Activated CD8-positive, alpha-beta T cell treated with anti-CD3 and anti-CD28 coated beads for 36 hours (primary cell): ENCODE measurements at regions of chr11 and their contacts with region 1.

Region 1: DNA sequence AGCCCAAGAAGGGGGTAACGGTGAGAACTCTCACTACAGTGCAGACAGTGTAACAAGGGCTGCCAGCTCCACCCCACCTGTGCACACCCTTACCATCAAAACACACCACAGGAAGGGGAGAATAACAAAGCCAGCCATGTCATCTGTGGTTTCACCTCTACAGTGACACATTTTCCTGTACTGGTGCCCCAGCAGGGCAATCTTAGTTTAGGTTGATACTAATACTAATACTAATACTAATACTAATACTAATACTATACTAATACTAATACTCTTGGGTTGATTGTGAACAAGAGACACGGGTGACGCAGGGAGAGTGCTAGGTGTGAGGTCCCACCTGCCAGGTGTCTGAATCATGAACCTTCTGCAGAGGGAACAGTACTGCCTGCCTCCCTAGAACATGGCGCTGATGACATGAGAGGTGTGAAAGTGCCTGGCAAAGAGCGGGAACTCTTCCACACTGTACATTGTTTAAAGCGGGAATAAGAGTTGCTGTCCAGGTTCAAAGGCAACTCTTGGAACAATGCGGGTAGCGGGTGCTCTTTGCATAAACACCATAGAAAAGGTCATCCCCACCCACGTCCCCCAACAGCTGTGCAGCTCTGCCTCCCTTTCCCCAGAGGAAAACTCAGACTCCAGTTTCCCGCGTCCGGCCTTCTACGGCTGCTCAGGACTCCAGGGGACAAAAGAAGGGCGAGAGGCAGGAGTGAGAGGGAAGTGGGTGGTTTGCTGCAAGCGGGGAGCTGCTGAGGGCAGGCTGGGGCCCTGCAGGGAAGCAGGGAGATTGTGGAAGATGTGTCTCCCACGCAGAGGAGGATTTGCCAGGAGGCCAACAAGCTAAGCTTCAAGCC is 25.0 kb upstream of the TMPRSS4 start:
- DNase-seq: peak; percentile 85
- ATAC-seq: peak; percentile 78
- H3K4me3 Mint-ChIP-seq: no peak overlapping the region
- H3K27ac Mint-ChIP-seq: peak overlapping the region; percentile 82
- H3K4me1 Mint-ChIP-seq: peaks cover 59% of the 10 kb centered on the region
- H3K27me3 Mint-ChIP-seq: no peaks in the 10 kb centered on the region
- CTCF ChIP-seq: no peak

Region 2: DNA sequence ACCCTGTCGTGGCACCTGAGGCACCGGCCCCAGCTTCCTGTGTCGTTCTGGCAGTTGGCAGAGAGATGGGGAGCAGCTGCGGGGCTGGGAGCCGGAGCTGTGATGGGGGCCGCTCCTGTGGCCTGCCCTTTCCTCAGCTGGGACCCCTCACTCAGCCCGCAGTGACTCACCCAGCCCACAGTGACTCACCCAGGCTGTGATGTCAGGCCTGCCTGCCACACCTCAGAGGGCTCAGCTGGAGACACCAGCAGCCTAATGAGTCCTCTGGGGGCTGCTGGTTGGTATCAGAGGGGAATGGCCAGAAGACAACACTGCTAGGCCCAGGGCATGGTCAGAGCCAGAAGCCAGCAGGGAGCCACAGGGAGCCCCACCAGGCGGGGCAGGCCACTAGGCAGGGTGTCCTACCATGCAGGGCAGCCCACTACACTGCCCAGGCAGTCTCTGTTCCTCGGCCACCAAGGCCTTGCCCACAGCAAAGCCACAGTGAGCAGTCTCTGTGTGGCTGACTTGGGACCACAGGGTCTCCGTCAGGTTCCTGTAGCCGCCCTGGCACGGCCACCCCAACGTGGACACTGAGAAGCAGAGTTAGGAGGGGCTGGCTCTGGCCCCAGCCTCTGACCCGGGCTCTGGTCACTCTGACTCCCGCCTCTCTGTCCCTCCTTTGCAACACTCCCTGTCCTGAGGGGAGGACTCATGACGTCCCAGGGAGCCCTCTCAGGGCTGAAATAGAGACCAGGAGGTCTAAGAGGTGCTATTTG is 223.0 kb before region 1 on chr11:
- CTCF ChIA-PET with region 1: interaction called, 168 read pairs
- POLR2A ChIA-PET with region 1: interaction called, 7 read pairs
- intact Hi-C with region 1: loop called (anchors 5 kb)
- DNase-seq: peak; percentile 97
- ATAC-seq: peak; percentile 89
- H3K4me3 Mint-ChIP-seq: peak overlapping the region; percentile 42
- H3K27ac Mint-ChIP-seq: peak overlapping the region; percentile 77
- H3K4me1 Mint-ChIP-seq: peaks cover 68% of the 10 kb centered on the region
- H3K27me3 Mint-ChIP-seq: no peaks in the 10 kb centered on the region
- CTCF ChIP-seq: no peak

Region 3: GRCh38 chr11:117907251-117907981 is 144.4 kb before region 1 on chr11:
- CTCF ChIA-PET with region 1: interaction called, 16 read pairs
- POLR2A ChIA-PET with region 1: no interaction called
- intact Hi-C with region 1: no loop called
- DNase-seq: peak; percentile 90
- ATAC-seq: peak; percentile 98
- H3K4me3 Mint-ChIP-seq: peak overlapping the region; percentile 63
- H3K27ac Mint-ChIP-seq: peak overlapping the region; percentile 64
- H3K4me1 Mint-ChIP-seq: peaks cover 17% of the 10 kb centered on the region
- H3K27me3 Mint-ChIP-seq: no peaks in the 10 kb centered on the region
- CTCF ChIP-seq: no peak

Region 4: DNA sequence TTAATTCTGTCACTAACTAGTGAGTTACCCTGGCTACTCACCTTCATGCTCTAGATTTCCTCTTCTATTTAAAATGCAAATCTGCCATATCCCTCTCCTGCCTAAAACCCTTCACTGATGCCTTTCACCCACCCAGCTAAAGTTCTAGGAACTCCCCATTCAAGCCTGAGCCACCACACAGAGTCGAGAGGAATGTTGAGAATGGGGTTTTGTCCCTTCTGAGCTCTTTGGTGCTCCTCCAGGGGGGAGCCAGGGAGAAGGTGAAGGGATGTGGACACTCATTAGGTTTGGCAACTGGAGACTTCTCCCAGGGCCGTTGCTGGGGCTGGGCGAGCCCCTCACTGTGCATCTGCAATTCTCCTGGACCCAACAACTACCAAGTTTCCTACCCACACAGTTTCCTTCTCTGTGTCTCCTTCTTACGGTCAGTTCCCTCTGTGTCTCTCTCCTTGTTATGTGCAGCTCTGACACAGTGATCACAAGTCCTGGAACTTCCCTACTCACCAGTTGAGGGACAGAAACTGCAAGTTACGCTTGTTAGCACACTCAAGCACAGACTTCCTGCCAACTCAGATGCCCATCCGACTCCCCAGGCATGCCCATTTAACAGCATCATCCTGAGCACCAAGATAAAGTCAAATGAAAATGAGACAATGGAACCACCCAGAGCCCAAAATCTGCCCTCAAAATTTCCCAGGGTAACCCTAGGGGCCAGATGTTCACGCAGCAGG is 72.2 kb before region 1 on chr11:
- CTCF ChIA-PET with region 1: interaction called, 56 read pairs
- POLR2A ChIA-PET with region 1: interaction called, 62 read pairs
- intact Hi-C with region 1: no loop called
- DNase-seq: peak; percentile 49
- ATAC-seq: peak; percentile 52
- H3K4me3 Mint-ChIP-seq: no peak overlapping the region
- H3K27ac Mint-ChIP-seq: peak overlapping the region; percentile 90
- H3K4me1 Mint-ChIP-seq: peaks cover 82% of the 10 kb centered on the region
- H3K27me3 Mint-ChIP-seq: no peaks in the 10 kb centered on the region
- CTCF ChIP-seq: no peak

Region 5: GRCh38 chr11:118002541-118003423 is 49.1 kb before region 1 on chr11:
- CTCF ChIA-PET with region 1: interaction called, 81 read pairs
- POLR2A ChIA-PET with region 1: interaction called, 155 read pairs
- intact Hi-C with region 1: no loop called
- DNase-seq: peak; percentile 88
- ATAC-seq: peak; percentile 65
- H3K4me3 Mint-ChIP-seq: peak overlapping the region; percentile 49
- H3K27ac Mint-ChIP-seq: peak overlapping the region; percentile 99
- H3K4me1 Mint-ChIP-seq: peaks cover 90% of the 10 kb centered on the region
- H3K27me3 Mint-ChIP-seq: no peaks in the 10 kb centered on the region
- CTCF ChIP-seq: no peak

Region 6: DNA sequence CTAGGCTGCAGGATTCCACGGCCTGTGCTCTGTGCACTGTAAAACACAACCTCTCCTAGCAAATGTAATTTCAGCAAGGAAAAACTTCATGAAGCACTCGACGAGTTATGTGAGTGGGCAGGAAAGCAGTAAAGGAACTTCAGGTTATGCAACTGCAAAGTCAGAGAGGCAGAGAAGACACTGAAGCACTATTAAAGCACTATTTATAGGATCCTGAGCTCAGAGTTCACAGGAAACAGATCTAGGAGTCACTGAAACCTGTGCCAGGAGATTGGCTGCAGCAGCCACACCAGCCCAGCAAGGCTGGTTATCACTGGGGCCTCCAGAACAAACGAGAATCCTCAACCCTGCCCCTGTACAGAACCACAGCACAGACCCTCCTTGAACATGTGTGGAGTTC is 32.4 kb after region 1 on chr11:
- CTCF ChIA-PET with region 1: interaction called, 10 read pairs
- POLR2A ChIA-PET with region 1: no interaction called
- intact Hi-C with region 1: no loop called
- DNase-seq: no peak
- ATAC-seq: no peak
- H3K4me3 Mint-ChIP-seq: no peak overlapping the region
- H3K27ac Mint-ChIP-seq: no peak overlapping the region
- H3K4me1 Mint-ChIP-seq: no peaks in the 10 kb centered on the region
- H3K27me3 Mint-ChIP-seq: no peaks in the 10 kb centered on the region
- CTCF ChIP-seq: no peak

Region 7: DNA sequence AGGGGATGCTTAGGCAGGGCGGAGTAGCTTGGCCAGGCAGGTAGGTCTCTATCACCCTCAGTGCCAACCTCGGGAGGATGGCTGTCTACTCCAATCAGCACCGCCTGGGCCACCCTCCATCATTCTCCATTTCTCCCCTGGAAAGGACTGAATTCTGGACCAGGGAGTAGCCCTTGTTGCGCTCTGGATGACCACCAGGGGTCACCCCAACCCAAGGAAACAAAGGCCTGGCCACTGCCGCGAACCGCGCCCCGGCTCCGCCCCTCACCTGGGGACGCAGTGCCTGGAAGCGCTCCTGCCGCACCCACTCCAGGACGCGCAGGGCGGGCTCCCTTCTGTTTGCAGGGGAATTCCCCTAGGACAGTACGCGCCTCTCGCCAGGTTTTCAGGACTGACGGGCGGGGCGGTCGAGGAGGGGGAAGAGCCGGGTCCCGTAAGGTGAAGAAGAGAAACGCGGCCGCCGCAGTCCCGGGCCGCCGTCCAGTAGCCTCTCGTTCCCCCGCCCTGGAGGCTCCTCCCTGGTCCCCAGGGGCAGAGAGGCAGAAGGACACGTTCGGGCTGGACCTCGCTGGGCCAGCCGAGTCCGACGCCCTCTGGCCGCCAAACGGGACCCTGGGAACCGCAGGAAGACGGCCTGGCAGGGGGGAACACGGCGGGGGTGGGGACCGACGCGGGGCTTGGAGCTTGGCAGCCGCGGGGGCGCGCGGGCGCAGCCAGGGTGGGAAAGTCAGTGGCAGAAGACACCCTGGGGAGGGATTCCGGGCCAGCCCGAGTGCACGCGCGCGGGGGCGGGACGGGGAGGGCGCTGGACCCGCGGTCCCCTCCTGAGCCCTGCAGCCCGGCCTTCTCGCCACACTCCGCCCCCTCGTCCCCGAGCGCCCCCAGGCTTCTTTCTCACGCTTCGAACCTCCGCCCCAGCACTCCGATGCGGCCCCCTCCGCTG is 93.7 kb after region 1 on chr11:
- CTCF ChIA-PET with region 1: no interaction called
- POLR2A ChIA-PET with region 1: no interaction called
- intact Hi-C with region 1: no loop called
- DNase-seq: peak; percentile 96
- ATAC-seq: peak; percentile 95
- H3K4me3 Mint-ChIP-seq: peak overlapping the region; percentile 76
- H3K27ac Mint-ChIP-seq: no peak overlapping the region
- H3K4me1 Mint-ChIP-seq: peaks cover 3% of the 10 kb centered on the region
- H3K27me3 Mint-ChIP-seq: peaks cover 42% of the 10 kb centered on the region
- CTCF ChIP-seq: peak; percentile 84